ENCODE measurements at regions of chr3 and their contacts with region 1.

Region 1: DNA sequence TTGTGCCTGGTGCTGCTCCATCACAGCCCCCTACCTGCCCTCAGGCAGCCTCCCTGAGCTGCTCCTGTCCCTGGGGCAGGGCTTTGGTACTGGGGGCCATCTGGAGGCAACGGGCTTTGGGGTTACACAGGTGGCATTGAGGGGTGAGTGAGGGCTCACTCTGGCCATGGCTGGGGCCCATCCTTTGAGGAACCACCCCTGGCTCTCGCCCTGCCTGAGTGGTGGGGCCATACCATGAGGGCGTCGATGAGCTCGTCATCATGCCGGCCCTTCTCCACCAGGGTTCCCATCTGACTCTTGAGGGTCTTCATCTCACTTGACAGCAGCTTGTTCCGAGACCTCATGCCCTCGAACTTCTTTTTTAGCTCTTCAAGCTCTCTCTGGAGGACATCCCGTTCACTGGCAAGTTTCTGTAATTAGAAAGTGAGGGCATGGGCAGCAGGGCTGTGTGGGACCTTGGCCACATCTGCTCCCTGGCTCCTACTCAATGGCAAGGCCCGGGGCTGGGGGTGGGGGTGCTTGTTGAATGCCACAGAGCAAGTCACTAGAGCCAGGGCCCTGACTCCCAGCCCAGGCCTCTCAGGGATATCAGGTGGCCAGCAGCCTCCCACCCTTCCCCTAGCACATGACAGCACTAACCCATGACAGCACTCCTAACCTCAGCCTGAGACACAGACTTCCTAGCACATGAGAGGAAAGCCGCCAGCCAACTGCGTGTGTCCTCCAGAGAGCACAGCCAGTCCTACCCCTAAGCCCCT is 33.5 kb downstream of the CCDC13 start:
- DNase-seq: no peak
- ATAC-seq: no peak
- H3K4me3 ChIP-seq: no peak overlapping the region
- H3K4me3 Mint-ChIP-seq: no peak overlapping the region
- H3K27ac ChIP-seq: no peak overlapping the region
- H3K27ac Mint-ChIP-seq: no peak overlapping the region
- H3K4me1 ChIP-seq: peaks cover 3 to 6% of the 10 kb centered on the region in 2 donors
- H3K4me1 Mint-ChIP-seq: peaks cover 18% of the 10 kb centered on the region
- H3K27me3 ChIP-seq: no peaks in the 10 kb centered on the region
- H3K27me3 Mint-ChIP-seq: no peaks in the 10 kb centered on the region
- CTCF ChIP-seq: no peak

Region 2: GRCh38 chr3:41532976-41533375 is 1206.6 kb before region 1 on chr3:
- CTCF ChIA-PET with region 1: no interaction called
- POLR2A ChIA-PET with region 1: no interaction called
- intact Hi-C with region 1: no loop called
- DNase-seq: no peak
- ATAC-seq: no peak
- H3K4me3 ChIP-seq: no peak overlapping the region
- H3K4me3 Mint-ChIP-seq: no peak overlapping the region
- H3K27ac ChIP-seq: no peak overlapping the region
- H3K27ac Mint-ChIP-seq: no peak overlapping the region
- H3K4me1 ChIP-seq: no peaks in the 10 kb centered on the region
- H3K4me1 Mint-ChIP-seq: no peaks in the 10 kb centered on the region
- H3K27me3 ChIP-seq: no peaks in the 10 kb centered on the region
- H3K27me3 Mint-ChIP-seq: no peaks in the 10 kb centered on the region
- CTCF ChIP-seq: no peak

Region 3: GRCh38 chr3:42660893-42661292 is 78.7 kb before region 1 on chr3:
- CTCF ChIA-PET with region 1: no interaction called
- POLR2A ChIA-PET with region 1: no interaction called
- intact Hi-C with region 1: loop called (anchors 5 kb)
- DNase-seq: no peak
- ATAC-seq: no peak
- H3K4me3 ChIP-seq: no peak overlapping the region
- H3K4me3 Mint-ChIP-seq: no peak overlapping the region
- H3K27ac ChIP-seq: no peak overlapping the region
- H3K27ac Mint-ChIP-seq: no peak overlapping the region
- H3K4me1 ChIP-seq: peaks cover 13 to 22% of the 10 kb centered on the region in 2 donors
- H3K4me1 Mint-ChIP-seq: peaks cover 13% of the 10 kb centered on the region
- H3K27me3 ChIP-seq: no peaks in the 10 kb centered on the region
- H3K27me3 Mint-ChIP-seq: no peaks in the 10 kb centered on the region
- CTCF ChIP-seq: no peak